Activated naive CD4-positive, alpha-beta T cell treated with anti-CD3 and anti-CD28 coated beads for 36 hours (primary cell): ENCODE measurements at regions of chr3 and their contacts with region 1.

Region 1: DNA sequence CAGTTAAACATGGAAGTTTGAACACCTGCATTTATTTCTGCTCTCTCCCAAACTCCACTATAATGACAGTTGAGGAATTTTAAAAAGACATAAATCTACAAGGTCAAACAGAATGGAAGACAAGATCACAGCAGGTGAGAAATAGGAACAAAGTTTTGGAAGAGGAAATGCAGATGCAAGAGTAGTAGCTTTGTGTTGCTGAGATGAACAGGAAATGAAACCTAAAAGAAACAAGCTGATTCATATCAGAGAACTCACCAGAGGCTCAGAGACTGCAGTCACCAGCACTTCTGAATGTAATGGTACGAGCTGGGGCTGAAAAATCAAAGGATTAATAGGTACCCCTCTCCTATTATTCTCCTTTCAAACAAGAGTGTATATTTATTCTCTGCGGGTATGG is 459.9 kb downstream of the RAP2B start:
- DNase-seq: peak; percentile 33
- H3K4me3 Mint-ChIP-seq: no peak overlapping the region
- H3K27ac Mint-ChIP-seq: peak overlapping the region; percentile 78
- H3K4me1 Mint-ChIP-seq: peaks cover 57% of the 10 kb centered on the region
- H3K27me3 Mint-ChIP-seq: no peaks in the 10 kb centered on the region

Region 2: GRCh38 chr3:152127058-152127457 is 1494.9 kb before region 1 on chr3:
- CTCF ChIA-PET with region 1: no interaction called
- intact Hi-C with region 1: loop called (anchors 10 kb)
- DNase-seq: peak; percentile 53
- H3K4me3 Mint-ChIP-seq: no peak overlapping the region
- H3K27ac Mint-ChIP-seq: no peak overlapping the region
- H3K4me1 Mint-ChIP-seq: peaks cover 29% of the 10 kb centered on the region
- H3K27me3 Mint-ChIP-seq: no peaks in the 10 kb centered on the region

Region 3: DNA sequence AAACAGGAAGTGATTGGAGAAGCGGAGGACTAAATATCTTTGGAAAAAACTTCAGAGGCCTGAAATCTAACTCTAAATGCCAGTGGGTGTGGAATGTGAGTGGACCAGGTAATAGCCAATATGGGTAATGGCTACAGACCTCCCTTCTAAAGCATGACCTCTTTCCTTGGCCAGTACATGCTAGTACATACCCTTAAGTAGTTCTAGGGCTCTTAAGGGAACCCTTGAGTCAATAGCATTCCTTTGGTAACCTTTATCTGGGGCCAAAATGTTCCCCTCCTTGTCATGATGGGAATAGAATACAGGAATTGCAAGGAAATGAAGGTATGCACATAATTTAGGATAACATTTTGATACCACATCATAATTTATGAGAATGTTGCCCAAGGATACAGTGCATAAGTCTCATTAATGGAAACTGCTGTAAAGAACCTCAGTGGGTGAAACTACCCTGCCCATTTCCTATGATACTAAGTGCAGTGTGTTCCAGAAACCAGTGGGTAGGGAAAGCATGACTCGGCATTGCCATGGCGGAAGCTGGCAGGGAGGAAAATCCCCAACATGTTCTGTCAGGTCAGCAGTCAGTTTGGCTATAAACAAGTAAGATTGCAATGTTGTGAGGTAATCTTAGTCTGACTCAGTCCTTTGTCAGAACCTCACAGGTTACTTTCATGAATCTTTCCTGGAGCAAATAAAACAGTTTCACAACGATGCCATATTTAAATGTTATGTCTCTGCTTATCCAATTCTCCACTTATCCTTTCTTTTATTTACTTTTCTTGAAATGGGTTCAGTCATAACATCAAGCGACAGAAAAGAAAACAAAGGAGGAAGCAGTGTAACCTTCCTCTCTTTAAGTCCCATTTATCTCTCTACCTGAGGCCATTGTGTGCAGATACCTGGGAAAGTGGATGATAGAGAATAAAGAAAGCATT is 483.4 kb before region 1 on chr3:
- CTCF ChIA-PET with region 1: no interaction called
- intact Hi-C with region 1: loop called (anchors 1 kb)
- DNase-seq: peak; percentile 88
- H3K4me3 Mint-ChIP-seq: no peak overlapping the region
- H3K27ac Mint-ChIP-seq: peak overlapping the region; percentile 71
- H3K4me1 Mint-ChIP-seq: peaks cover 24% of the 10 kb centered on the region
- H3K27me3 Mint-ChIP-seq: peaks cover 3% of the 10 kb centered on the region

Region 4: GRCh38 chr3:153291056-153291685 is 330.8 kb before region 1 on chr3:
- CTCF ChIA-PET with region 1: no interaction called
- intact Hi-C with region 1: loop called (anchors 1 kb)
- DNase-seq: peak; percentile 20
- H3K4me3 Mint-ChIP-seq: no peak overlapping the region
- H3K27ac Mint-ChIP-seq: peak overlapping the region; percentile 26
- H3K4me1 Mint-ChIP-seq: peaks cover 40% of the 10 kb centered on the region
- H3K27me3 Mint-ChIP-seq: no peaks in the 10 kb centered on the region

Region 5: GRCh38 chr3:153640689-153641301 is 18.8 kb after region 1 on chr3:
- CTCF ChIA-PET with region 1: interaction called, 5 read pairs
- intact Hi-C with region 1: loop called (anchors 1 kb)
- DNase-seq: no peak
- H3K4me3 Mint-ChIP-seq: no peak overlapping the region
- H3K27ac Mint-ChIP-seq: no peak overlapping the region
- H3K4me1 Mint-ChIP-seq: peaks cover 41% of the 10 kb centered on the region
- H3K27me3 Mint-ChIP-seq: no peaks in the 10 kb centered on the region

Region 6: GRCh38 chr3:153881201-153881600 is 259.2 kb after region 1 on chr3:
- CTCF ChIA-PET with region 1: no interaction called
- intact Hi-C with region 1: no loop called
- DNase-seq: no peak
- H3K4me3 Mint-ChIP-seq: no peak overlapping the region
- H3K27ac Mint-ChIP-seq: no peak overlapping the region
- H3K4me1 Mint-ChIP-seq: no peaks in the 10 kb centered on the region
- H3K27me3 Mint-ChIP-seq: peaks cover 2% of the 10 kb centered on the region

Region 7: GRCh38 chr3:154071146-154071545 is 449.2 kb after region 1 on chr3:
- CTCF ChIA-PET with region 1: no interaction called
- intact Hi-C with region 1: no loop called
- DNase-seq: no peak
- H3K4me3 Mint-ChIP-seq: no peak overlapping the region
- H3K27ac Mint-ChIP-seq: no peak overlapping the region
- H3K4me1 Mint-ChIP-seq: no peaks in the 10 kb centered on the region
- H3K27me3 Mint-ChIP-seq: peaks cover 5% of the 10 kb centered on the region

Region 8: GRCh38 chr3:154510780-154511179 is 888.8 kb after region 1 on chr3:
- CTCF ChIA-PET with region 1: no interaction called
- intact Hi-C with region 1: no loop called
- DNase-seq: no peak
- H3K4me3 Mint-ChIP-seq: no peak overlapping the region
- H3K27ac Mint-ChIP-seq: no peak overlapping the region
- H3K4me1 Mint-ChIP-seq: no peaks in the 10 kb centered on the region
- H3K27me3 Mint-ChIP-seq: no peaks in the 10 kb centered on the region